ENCODE measurements at regions of chr2 and their contacts with region 1.

Region 1: GRCh38 chr2:65186872-65187851 is 40.5 kb upstream of the ACTR2 start:
- H3K4me3 ChIP-seq: no peak overlapping the region
- H3K27ac ChIP-seq: no peak overlapping the region
- H3K4me1 ChIP-seq: no peaks in the 10 kb centered on the region
- CTCF ChIP-seq: peak; percentile 65

Region 2: DNA sequence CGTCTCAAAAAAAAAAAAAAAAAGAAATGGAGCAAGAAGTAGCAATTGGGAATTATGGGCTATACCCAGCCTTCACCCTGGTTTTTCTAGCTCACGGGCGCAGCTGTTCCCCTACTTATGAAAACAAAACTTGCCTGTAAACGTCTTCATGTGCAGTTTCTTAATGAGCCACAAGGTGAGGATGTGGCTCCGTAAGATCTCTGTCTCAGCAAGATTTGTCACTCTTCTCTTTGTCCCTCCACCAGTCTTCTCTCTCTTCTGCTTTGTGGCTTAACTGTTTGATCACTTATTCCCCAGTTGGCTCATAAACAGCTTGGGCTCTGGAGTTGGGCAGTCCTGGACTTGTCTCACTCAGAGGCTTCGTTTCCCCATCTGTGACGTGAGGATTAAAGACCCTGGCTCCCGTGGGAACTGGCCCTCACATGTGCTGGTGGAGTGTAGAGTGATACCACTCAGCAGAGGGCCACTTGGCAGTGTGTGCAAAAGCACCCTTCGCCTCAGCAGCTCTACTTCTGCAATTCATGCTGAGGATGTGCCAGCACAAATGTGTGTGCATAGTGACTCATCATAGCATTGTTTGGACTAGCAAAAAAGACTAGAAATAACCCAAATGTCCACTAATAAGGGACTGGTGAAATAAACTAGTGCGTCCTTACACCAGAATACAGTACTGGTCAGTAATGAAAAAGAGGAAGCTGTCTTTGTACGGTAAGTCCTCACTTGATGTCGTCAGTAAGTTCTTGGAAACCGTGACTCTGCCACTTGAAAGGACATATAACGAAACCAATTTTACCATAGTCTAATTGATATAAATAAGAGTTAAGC is 122.2 kb before region 1 on chr2:
- CTCF ChIA-PET with region 1: interaction called, 16 read pairs
- POLR2A ChIA-PET with region 1: no interaction called
- H3K4me3 ChIP-seq: no peak overlapping the region
- H3K27ac ChIP-seq: no peak overlapping the region
- H3K4me1 ChIP-seq: no peaks in the 10 kb centered on the region
- CTCF ChIP-seq: peak; percentile 86

Region 3: DNA sequence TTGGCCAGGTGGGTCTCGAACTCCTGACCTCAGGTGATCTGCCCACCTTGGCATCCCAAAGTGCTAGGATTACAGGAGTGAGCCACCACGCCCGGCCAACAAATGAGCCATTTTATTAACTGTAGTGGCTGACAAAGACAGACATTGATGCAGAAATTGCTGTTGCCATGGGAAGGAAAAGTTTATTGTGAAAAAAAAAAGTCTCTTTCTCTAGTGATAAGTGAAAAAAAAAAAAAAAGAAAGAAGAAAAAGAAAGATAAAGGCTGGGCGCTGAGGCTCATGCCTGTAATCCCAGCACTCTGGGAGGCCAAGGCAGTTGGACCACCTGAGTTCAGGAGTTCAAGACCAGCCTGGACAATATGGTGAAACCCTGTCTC is 17.4 kb before region 1 on chr2:
- CTCF ChIA-PET with region 1: interaction called, 11 read pairs
- POLR2A ChIA-PET with region 1: no interaction called
- H3K4me3 ChIP-seq: no peak overlapping the region
- H3K27ac ChIP-seq: no peak overlapping the region
- H3K4me1 ChIP-seq: no peaks in the 10 kb centered on the region
- CTCF ChIP-seq: no peak

Region 4: GRCh38 chr2:65722028-65722778 is 535.0 kb after region 1 on chr2:
- CTCF ChIA-PET with region 1: no interaction called
- POLR2A ChIA-PET with region 1: no interaction called
- H3K4me3 ChIP-seq: no peak overlapping the region
- H3K27ac ChIP-seq: no peak overlapping the region
- H3K4me1 ChIP-seq: no peaks in the 10 kb centered on the region
- CTCF ChIP-seq: peak; percentile 66

Region 5: DNA sequence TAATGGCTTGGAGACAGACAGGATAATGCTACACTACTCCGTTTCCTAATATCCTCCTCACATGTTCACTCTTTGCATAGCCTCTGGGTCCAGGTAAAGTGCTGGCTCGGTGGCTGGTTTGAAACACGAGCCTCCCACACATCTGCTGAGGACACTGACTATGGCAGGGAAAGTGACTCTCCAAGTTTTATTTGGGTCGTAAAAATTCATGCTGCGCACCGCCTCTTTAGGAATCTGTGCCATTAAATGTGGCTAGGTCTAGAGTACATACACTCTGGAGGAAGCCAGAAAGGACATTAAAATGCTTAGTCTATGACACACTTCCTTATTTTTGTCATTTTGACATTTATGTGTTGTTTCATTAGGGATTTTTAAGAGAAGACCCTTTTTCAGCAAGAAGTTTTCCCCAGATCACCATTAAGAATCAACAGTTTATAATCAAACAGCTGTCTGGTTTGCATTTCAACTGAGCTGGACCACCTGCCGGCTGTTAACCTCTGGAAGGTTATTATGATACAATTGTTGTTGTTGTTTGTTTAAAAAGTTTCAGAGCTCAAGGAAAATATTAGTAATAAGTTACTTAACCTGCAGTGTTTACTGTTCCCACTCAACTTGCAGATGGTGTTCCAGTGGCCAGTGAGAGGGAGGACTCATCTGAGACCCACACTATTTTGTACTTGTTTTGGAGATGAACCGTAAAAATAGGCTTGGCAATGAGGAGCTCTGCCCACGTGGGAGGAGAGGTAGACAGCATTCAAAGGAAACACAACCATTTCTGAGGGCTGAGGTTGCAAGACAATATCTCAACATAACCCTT is 804.4 kb after region 1 on chr2:
- CTCF ChIA-PET with region 1: no interaction called
- POLR2A ChIA-PET with region 1: no interaction called
- H3K4me3 ChIP-seq: no peak overlapping the region
- H3K27ac ChIP-seq: peak overlapping the region; percentile 47; the same call in 1 of the 2 replicates
- H3K4me1 ChIP-seq: peaks cover 11% of the 10 kb centered on the region; the same call in 1 of the 2 replicates
- CTCF ChIP-seq: no peak

Measured in HEK293 (cell line).